HepG2 (cell line): ENCODE measurements at regions of chr3 and their contacts with region 1.

Region 1: DNA sequence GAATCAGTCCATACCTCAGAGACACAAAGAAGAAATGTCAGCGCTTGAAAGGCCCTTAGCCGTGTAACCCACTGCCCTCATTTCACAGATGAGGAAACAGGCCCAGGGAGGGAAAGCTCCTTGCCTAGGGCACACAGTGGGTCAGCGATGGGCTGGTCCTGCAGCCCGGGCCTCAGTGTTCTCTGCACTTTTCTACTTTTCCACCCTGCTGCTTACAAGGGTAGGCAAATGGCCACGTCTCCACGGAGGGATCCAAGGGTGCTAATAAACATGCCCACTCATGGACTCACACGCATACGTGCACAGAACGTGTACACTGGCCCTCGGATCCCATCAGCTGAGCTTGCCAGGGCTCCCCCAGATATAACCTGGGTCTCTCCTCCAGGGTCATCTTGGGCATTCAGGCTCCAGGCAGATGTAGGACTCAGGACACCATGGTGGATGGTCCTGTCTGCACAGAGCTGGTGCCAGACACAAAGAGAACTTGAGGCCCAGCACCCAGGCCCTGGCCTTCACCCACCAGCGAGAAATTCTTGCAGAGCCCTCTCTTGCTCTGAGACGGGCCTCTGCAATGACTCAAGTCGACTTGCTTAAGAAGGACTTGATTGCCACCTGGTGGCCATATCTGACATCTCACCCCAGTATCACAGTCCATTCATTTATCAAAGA is 34.5 kb upstream of the VPS8 start:
- DNase-seq: peak; percentile 83
- ATAC-seq: peak; percentile 86
- H3K4me3 ChIP-seq: no peak overlapping the region
- H3K27ac ChIP-seq: no peak overlapping the region
- H3K4me1 ChIP-seq: peaks cover 5% of the 10 kb centered on the region; the same call in 1 of the 2 replicates
- H3K27me3 ChIP-seq: peaks cover 3 to 36% of the 10 kb centered on the region in 2 experiments
- CTCF ChIP-seq: peak; percentile 85
- EP300 ChIP-seq: no peak
- POLR2A ChIP-seq: no peak
- RAD21 ChIP-seq: peak; percentile 79

Region 2: DNA sequence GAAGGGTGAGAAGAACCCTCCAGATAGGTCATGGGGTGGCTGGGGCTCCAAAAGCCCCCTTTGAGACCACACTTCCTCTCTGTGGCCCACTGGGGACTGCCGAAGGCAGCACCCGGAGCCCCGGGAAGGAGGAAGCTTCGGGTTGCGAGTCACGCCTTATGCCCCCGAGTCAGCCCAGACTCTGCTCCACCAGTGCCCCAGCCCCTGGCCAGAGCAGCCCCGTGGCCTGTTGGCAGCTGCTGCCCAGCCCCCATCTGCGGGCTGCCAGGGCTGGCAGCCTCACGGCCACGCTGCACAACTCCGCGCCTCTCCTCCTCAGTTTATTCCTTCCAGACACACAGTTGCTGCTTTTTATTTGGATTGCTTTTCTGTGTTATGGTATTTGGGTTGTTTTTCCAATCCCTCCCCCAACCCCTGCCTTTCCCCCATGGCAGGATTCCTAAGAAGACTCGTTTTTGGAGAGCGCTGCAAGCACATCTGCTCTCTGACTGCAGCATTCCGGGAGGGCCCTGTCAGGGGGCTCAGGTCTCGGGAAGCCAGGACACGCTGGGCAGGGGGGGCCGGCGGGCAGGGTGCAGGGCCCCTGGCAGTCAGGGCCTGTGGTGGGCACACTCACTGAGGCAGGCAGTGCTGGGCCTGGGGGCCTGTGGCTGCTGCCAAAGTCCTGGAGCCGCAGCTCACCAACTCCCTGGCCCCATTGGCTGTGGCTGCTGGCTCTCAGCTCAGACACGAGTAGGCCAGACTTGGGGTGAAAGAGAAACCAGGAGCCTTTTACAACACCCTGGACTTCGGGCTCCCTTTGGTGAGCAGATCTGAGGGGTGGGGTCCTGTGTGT is 85.9 kb before region 1 on chr3:
- CTCF ChIA-PET with region 1: no interaction called
- POLR2A ChIA-PET with region 1: no interaction called
- in situ Hi-C with region 1: no loop called
- intact Hi-C with region 1: loop called (anchors 5 kb)
- DNase-seq: no peak
- ATAC-seq: peak; percentile 34; the same call in 1 of the 3 replicates
- H3K4me3 ChIP-seq: no peak overlapping the region
- H3K27ac ChIP-seq: no peak overlapping the region
- H3K4me1 ChIP-seq: no peaks in the 10 kb centered on the region
- H3K27me3 ChIP-seq: peaks cover 3 to 45% of the 10 kb centered on the region in 2 experiments; a peak in 3 of 5 replicates
- CTCF ChIP-seq: no peak
- EP300 ChIP-seq: no peak
- POLR2A ChIP-seq: no peak
- RAD21 ChIP-seq: no peak